AG04450 (cell line): ENCODE measurements at regions of chr20 and their contacts with region 1.

Region 1: GRCh38 chr20:34037121-34037520 is 43.4 kb downstream of the RALY start:
- DNase-seq: no peak
- H3K4me3 ChIP-seq: no peak overlapping the region
- H3K27ac ChIP-seq: no peak overlapping the region
- H3K27me3 ChIP-seq: no peaks in the 10 kb centered on the region
- CTCF ChIP-seq: no peak

Region 2: DNA sequence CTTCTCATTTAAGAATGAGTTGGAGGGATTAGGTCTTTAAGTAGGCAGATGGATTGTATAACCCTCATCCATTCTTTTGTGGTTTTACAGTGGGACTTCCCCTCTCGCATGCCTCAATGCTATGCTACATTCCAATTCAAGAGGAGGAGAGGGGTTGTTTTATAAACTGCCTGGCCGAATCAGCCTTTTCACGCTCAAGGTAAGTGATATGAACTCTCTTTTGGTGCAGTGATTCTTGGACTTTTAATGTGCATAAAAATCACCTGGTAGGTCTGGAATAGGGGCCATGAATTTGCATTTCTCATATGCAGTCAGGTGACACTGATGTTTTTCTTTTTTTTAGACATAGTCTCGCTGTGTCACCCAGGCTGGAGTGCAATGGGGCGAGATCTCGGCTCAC is 1668.2 kb before region 1 on chr20:
- CTCF ChIA-PET with region 1: no interaction called
- POLR2A ChIA-PET with region 1: no interaction called
- DNase-seq: no peak
- H3K4me3 ChIP-seq: no peak overlapping the region
- H3K27ac ChIP-seq: no peak overlapping the region
- H3K27me3 ChIP-seq: no peaks in the 10 kb centered on the region
- CTCF ChIP-seq: no peak

Region 3: DNA sequence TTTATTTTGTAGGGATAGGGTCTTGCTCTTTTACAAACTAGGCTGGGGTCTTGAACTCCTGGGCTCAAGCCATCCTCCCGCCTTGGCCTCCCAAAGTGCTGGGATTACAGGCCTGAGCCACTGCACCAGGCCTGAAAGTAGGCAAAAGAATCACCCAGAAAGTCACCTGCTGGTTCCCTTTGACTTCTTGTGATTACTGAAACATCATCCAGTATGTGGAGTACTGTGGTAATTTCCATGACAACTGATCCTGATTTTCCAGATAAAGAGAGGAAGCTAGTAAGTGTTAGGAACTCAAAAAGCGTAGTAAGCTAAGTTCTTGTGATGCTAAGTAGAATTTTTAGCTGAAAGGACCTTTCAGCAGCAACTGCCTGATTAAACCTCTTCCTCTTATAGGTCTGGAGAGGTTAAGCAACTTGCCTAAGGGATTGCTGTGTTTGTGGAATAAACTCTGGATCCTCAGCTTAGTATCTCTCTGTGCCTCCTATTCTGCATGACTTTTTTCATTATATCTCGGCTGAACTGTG is 26.7 kb before region 1 on chr20:
- CTCF ChIA-PET with region 1: no interaction called
- POLR2A ChIA-PET with region 1: interaction called, 15 read pairs
- DNase-seq: no peak
- H3K4me3 ChIP-seq: no peak overlapping the region
- H3K27ac ChIP-seq: no peak overlapping the region
- H3K27me3 ChIP-seq: no peaks in the 10 kb centered on the region
- CTCF ChIP-seq: no peak